Psoas muscle (tissue), 8 donors: ENCODE measurements at regions of chr9 and their contacts with region 1.

Region 1: DNA sequence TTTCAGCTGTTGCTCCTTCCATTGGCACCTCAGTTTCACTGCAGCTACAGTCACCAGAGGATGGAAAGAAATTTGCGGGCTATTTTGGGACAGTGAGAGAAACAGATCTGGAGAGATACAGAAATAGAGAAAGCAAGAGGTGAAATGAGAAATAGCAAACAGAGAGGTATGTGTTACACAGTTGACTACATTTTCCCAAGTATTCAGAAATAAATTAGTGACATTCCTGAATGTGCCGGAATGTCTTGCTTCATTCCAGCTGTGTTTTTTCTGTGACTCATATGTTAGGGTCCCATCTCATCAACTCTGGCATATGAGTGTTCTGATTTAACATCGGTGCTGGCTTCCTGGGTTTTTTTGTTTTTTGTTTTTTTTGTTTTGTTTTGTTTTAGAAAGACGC is 63.8 kb upstream of the ZNF462 start:
- DNase-seq: no peak
- ATAC-seq: peak; percentile 65 to 82 (median 74)
- H3K4me3 ChIP-seq: peak overlapping the region; percentile 1
- H3K27ac ChIP-seq: no peak overlapping the region
- H3K4me1 ChIP-seq: peaks cover 23% of the 10 kb centered on the region
- H3K27me3 ChIP-seq: no peaks in the 10 kb centered on the region
- CTCF ChIP-seq: no peak

Region 2: DNA sequence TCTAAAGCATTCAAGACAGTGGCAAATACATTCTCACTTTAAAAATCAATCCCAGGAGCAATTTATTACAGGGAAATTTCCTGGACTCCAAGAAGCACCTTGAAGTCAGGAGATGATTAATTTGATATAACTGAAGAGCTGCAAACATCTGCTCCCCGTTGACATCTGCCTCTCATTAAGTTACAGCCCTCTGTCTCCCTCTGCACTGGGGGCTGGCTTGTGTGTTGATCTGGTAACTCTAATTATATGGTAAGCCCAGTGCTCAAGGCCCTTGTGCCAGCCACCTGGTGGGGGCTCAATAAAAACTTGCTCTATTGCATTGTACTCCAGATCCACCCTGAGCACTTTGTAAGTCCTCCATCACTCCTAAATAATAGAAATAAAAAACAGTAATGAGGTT is 67.2 kb before region 1 on chr9:
- intact Hi-C with region 1: loop called in 1 of 2 experiments (anchors 10 kb)
- DNase-seq: no peak
- ATAC-seq: no peak
- H3K4me3 ChIP-seq: no peak overlapping the region
- H3K27ac ChIP-seq: peak overlapping the region; percentile 10
- H3K4me1 ChIP-seq: peaks cover 15% of the 10 kb centered on the region
- H3K27me3 ChIP-seq: no peaks in the 10 kb centered on the region
- CTCF ChIP-seq: no peak

Region 3: GRCh38 chr9:106843371-106843770 is 44.2 kb after region 1 on chr9:
- intact Hi-C with region 1: no loop called
- DNase-seq: no peak
- ATAC-seq: no peak
- H3K4me3 ChIP-seq: no peak overlapping the region
- H3K27ac ChIP-seq: no peak overlapping the region
- H3K4me1 ChIP-seq: no peaks in the 10 kb centered on the region
- H3K27me3 ChIP-seq: no peaks in the 10 kb centered on the region
- CTCF ChIP-seq: no peak

Region 4: GRCh38 chr9:107008011-107008410 is 208.9 kb after region 1 on chr9:
- intact Hi-C with region 1: no loop called
- DNase-seq: no peak
- ATAC-seq: no peak
- H3K4me3 ChIP-seq: no peak overlapping the region
- H3K27ac ChIP-seq: no peak overlapping the region
- H3K4me1 ChIP-seq: no peaks in the 10 kb centered on the region
- H3K27me3 ChIP-seq: no peaks in the 10 kb centered on the region
- CTCF ChIP-seq: no peak